ENCODE measurements at regions of chr10 and their contacts with region 1.

Region 1: GRCh38 chr10:122435212-122435827 is 19.1 kb upstream of the ARMS2 start:
- DNase-seq: no peak
- H3K4me3 ChIP-seq: no peak overlapping the region
- H3K27ac ChIP-seq: peak overlapping the region in 31 of 59 donors; percentile 2 to 71 (median 30)
- H3K27me3 ChIP-seq: no peaks in the 10 kb centered on the region
- CTCF ChIP-seq: peak; percentile 71 to 96 (median 85)

Region 2: GRCh38 chr10:122298598-122299301 is 136.6 kb before region 1 on chr10:
- intact Hi-C with region 1: loop called (anchors 2 to 5 kb)
- DNase-seq: peak in 9 of 10 donors; percentile 38 to 81 (median 76)
- H3K4me3 ChIP-seq: peak overlapping the region in 55 of 59 donors; percentile 6 to 66 (median 38)
- H3K27ac ChIP-seq: peak overlapping the region in 56 of 59 donors; percentile 38 to 100 (median 94)
- H3K27me3 ChIP-seq: no peaks in the 10 kb centered on the region
- CTCF ChIP-seq: peak; percentile 65 to 99 (median 96)

Region 3: GRCh38 chr10:122587098-122587760 is 151.9 kb after region 1 on chr10:
- intact Hi-C with region 1: no loop called
- DNase-seq: no peak
- H3K4me3 ChIP-seq: no peak overlapping the region
- H3K27ac ChIP-seq: no peak overlapping the region
- H3K27me3 ChIP-seq: no peaks in the 10 kb centered on the region
- CTCF ChIP-seq: no peak

Measured in dorsolateral prefrontal cortex (tissue), 120 donors.